BJ (cell line): ENCODE measurements at regions of chr6 and their contacts with region 1.

Region 1: DNA sequence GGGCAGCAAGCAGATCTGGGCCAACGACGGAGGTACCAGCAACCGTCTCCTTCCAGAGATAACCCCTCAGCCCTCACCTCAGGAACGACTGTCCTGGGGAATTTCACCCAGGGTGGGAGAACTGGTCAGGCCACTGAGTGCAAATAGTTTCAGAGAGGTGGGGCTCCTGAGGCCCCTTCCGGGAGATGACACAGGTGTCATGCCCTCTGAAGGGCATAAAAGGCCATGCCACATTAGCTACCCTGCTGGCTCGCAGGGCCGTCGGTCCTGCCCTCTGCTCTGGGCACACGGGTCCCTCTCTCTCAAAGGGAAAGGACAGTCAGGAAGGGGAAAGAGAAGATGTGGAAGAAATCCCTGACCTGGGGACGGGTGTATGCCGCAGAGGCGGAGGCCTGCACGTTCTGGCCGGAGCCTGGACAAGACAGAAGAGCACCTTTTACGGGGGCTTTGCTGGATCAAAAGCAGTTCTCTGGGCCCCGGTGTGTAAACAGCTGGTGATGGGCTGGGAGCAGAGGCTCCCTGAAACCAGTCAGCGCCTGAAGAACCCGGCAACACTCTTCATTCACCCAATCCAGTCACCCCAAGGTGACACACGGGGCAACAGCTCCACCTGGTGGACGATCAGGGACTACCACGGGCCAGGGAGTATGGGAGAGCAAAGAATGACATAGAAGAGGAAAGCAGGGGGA is 6.4 kb upstream of the TAF8 start:
- DNase-seq: no peak
- H3K4me3 ChIP-seq: no peak overlapping the region
- H3K27me3 ChIP-seq: peaks cover 8% of the 10 kb centered on the region
- CTCF ChIP-seq: peak; percentile 96

Region 2: DNA sequence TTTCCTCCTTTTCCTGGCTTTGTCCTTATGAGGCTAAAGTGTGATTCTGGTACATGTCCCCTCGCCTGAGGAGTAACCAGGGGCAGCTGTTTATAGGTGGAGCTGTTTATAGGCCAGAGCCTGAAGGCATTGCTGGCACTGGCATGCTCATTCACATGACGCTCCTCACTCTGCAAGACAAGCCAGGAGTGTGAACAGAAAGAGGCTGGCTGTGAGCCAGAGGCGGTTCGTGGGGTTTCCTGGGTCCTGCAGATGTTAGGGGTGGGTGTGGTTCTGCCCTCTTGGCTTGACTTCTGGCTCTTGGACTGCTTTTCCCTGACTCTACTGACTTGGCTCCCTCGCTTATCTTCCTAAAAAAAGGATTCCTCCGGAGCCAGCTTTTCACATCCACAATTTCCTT is 418.5 kb before region 1 on chr6:
- CTCF ChIA-PET with region 1: no interaction called
- POLR2A ChIA-PET with region 1: no interaction called
- DNase-seq: no peak
- H3K4me3 ChIP-seq: no peak overlapping the region
- H3K27me3 ChIP-seq: peaks cover 4% of the 10 kb centered on the region
- CTCF ChIP-seq: no peak

Region 3: DNA sequence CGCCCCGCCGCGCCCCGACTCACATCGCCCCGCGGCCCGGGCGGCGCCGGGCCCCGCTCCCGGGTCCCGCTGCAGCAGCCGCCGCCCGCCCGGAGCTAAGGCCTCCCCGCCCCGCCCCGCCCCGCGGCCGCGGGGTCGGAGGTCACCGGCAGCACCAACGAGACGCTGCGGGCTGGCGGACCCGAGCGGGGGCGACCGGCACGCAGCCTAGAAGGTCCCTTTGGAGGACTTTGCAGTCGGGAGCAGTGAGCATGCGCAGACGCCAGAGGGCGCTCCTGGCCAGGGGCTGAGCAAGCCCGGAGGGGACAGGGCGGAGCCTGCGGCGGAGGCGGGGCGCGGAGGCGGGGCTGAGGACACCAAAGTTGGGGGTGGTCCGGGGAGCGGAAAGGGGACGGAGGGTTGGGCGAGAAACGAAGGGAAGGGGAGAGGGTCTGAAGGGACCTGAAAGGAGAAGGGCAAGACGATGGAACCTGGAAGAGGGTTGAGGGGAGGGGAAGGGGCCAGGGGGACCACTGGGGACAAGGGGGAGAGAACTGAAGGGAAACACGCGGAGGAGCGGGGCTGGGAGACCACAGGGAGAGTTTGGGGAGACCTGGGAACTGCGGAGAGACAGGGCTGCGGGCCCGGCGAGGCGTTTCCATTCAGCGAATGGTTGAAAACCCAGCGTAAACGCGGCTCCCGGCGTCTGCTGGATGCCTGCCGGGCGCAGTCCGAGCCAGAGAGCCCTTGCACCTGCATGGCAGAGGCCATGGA is 264.0 kb before region 1 on chr6 and contains the start of gene FRS3:
- CTCF ChIA-PET with region 1: interaction called, 106 read pairs
- POLR2A ChIA-PET with region 1: no interaction called
- DNase-seq: peak; percentile 51
- H3K4me3 ChIP-seq: peak within 1 kb of the TSS; percentile 74
- H3K27me3 ChIP-seq: no peaks in the 10 kb centered on the region
- CTCF ChIP-seq: peak; percentile 96
- polyA plus RNA-seq, gene FRS3: 2.1 and 3.3 TPM in 2 replicates

Region 4: DNA sequence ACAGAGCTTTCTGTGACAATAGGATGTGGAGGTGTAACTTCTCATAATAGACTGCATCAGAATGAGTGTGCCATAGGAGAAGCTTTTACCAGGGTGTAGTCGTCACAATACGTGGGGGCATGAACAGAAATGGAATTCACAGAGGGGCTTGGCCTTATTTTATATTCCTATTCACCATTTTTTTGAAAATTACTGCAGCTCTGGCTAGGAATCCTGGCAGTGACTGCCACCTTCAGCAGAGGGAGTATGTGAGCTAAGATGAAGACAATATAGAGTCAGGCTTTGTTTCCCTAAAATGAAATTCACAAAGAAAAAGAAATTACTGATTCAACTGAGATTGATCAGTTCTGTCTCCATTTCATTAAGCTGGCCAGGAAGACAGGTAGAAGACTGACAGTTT is 242.6 kb before region 1 on chr6:
- CTCF ChIA-PET with region 1: interaction called, 39 read pairs
- POLR2A ChIA-PET with region 1: no interaction called
- DNase-seq: no peak
- H3K4me3 ChIP-seq: no peak overlapping the region
- H3K27me3 ChIP-seq: no peaks in the 10 kb centered on the region
- CTCF ChIP-seq: peak; percentile 66

Region 5: GRCh38 chr6:41846666-41847237 is 197.2 kb before region 1 on chr6:
- CTCF ChIA-PET with region 1: interaction called, 47 read pairs
- POLR2A ChIA-PET with region 1: no interaction called
- DNase-seq: peak; percentile 75
- H3K4me3 ChIP-seq: no peak overlapping the region
- H3K27me3 ChIP-seq: no peaks in the 10 kb centered on the region
- CTCF ChIP-seq: peak; percentile 84

Region 6: GRCh38 chr6:41920921-41921711 is 122.8 kb before region 1 on chr6 and contains the starts of genes BYSL and MED20:
- CTCF ChIA-PET with region 1: interaction called, 23 read pairs
- POLR2A ChIA-PET with region 1: no interaction called
- DNase-seq: peak; percentile 52
- H3K4me3 ChIP-seq: peak within 1 kb of the TSS; percentile 77
- H3K27me3 ChIP-seq: no peaks in the 10 kb centered on the region
- CTCF ChIP-seq: peak; percentile 98
- polyA plus RNA-seq, gene BYSL: 18.0 and 28.5 TPM in 2 replicates
- polyA plus RNA-seq, gene MED20: 33.0 and 34.4 TPM in 2 replicates

Region 7: DNA sequence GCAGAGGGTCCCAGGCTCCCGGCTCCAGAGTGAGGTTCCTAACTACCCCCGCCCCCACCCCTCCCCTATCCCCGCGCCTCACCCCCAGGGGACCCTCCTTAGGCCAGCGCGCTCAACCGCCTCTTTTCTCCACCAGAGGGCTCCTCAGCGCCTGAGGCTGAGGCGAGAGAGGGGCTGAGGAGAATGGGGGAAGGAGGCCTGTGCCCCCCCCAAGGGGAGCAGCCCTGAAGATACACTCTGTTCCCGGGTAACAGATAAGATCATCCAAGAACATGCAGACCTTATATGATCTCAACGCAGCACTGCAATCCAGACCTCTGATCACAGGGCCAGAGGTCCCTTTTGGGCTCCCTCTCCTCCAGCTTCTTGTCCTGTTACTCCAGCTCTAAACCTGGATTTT is 217.0 kb after region 1 on chr6:
- CTCF ChIA-PET with region 1: no interaction called
- POLR2A ChIA-PET with region 1: no interaction called
- DNase-seq: no peak
- H3K4me3 ChIP-seq: no peak overlapping the region
- H3K27me3 ChIP-seq: no peaks in the 10 kb centered on the region
- CTCF ChIP-seq: peak; percentile 61